ENCODE measurements at regions of chr2 and their contacts with region 1.

Region 1: DNA sequence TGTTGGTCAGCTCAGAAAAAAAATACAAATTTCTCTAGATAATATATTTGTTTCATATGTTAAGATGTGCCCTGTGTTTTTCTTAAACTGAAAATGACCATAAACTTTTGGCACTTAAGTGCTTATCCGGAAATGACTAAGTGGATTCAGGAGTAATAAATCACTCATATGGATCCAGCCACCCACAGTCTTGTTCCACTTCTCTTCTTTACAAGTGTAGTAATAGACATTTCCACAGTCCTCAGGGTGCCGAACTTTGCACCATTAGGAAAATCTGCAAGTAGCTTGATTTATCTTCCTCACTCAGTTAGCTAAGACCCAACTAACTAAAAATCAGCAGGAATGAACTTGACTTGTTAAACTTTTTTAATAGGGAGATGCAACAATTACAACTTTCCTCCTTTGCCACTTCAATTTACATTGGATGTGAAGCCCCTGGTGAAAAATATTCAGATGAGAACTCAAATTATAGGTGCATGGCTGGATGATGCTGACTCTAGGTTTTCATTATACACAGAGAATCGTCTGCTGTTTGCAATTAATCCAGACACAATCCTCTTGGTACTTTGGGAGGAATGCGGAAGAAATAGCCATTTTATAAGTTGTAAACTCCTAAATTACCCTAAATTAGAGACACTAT is 322.5 kb downstream of the ARHGAP15 start:
- DNase-seq: no peak
- ATAC-seq: no peak
- H3K4me3 ChIP-seq: no peak overlapping the region
- H3K27ac ChIP-seq: no peak overlapping the region
- H3K4me1 ChIP-seq: no peaks in the 10 kb centered on the region
- H3K27me3 ChIP-seq: no peaks in the 10 kb centered on the region
- CTCF ChIP-seq: no peak

Region 2: GRCh38 chr2:142621287-142621686 is 830.5 kb before region 1 on chr2:
- CTCF ChIA-PET with region 1: no interaction called
- POLR2A ChIA-PET with region 1: no interaction called
- in situ Hi-C with region 1: no loop called
- intact Hi-C with region 1: no loop called
- DNase-seq: no peak
- ATAC-seq: no peak
- H3K4me3 ChIP-seq: no peak overlapping the region
- H3K27ac ChIP-seq: no peak overlapping the region
- H3K4me1 ChIP-seq: no peaks in the 10 kb centered on the region
- H3K27me3 ChIP-seq: no peaks in the 10 kb centered on the region; the same call in 1 of the 2 replicates
- CTCF ChIP-seq: no peak

Region 3: GRCh38 chr2:143333168-143333791 is 118.5 kb before region 1 on chr2:
- CTCF ChIA-PET with region 1: no interaction called
- POLR2A ChIA-PET with region 1: interaction called, 12 read pairs
- in situ Hi-C with region 1: no loop called
- intact Hi-C with region 1: no loop called
- DNase-seq: no peak
- ATAC-seq: no peak
- H3K4me3 ChIP-seq: no peak overlapping the region
- H3K27ac ChIP-seq: no peak overlapping the region
- H3K4me1 ChIP-seq: no peaks in the 10 kb centered on the region
- H3K27me3 ChIP-seq: no peaks in the 10 kb centered on the region
- CTCF ChIP-seq: no peak